Brain microvascular endothelial cell (primary cell): ENCODE measurements at regions of chr7 and their contacts with region 1.

Region 1: DNA sequence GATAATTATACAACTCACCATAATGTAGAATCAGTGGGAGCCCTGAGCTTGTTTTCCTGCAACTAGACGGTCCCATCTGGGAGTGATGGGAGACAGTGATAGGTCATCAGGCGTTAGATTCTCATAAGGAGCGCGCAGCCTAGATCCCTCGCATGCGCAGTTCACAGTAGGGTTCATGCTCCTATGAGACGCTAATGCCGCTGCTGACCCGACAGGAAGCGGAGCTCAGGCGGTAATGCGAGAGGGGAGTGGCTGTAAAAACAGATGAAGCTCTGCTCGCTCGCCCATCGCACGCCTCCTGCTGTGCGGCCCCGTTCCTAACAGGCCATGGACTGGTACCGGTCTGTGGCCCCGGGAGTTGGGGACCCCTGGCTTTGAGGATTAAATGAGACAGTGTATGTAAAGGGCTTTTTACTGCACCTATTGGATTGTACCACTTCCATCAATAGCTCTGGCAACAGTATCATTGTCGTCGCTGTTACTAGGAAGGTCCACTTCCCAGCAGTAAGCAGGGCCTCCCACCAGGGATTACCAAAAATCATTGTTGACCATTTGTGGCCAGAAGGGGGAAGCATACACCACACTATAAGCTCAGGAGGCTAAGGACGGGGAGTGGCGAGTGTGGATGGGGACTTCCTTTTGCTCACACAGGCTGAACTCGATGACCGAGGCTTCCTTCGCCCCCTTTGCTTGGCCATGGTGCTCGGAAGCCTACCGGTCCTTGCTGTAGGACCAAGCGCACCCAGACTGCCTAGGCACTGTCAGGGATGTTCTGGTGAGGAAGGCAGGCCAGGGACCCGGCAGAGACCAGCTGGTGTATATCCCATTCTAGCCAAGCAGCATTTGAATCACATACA is 26.4 kb downstream of the AKR1B1 start:
- DNase-seq: peak; percentile 89
- H3K4me3 ChIP-seq: peak overlapping the region; percentile 51
- H3K27ac ChIP-seq: peak overlapping the region; percentile 13
- H3K27me3 ChIP-seq: no peaks in the 10 kb centered on the region
- CTCF ChIP-seq: peak; percentile 68

Region 2: GRCh38 chr7:134514663-134515062 is 82.1 kb after region 1 on chr7:
- in situ Hi-C with region 1: loop called (anchors 5 kb)
- DNase-seq: peak; percentile 66
- H3K4me3 ChIP-seq: no peak overlapping the region
- H3K27ac ChIP-seq: no peak overlapping the region
- H3K27me3 ChIP-seq: no peaks in the 10 kb centered on the region
- CTCF ChIP-seq: peak; percentile 73